GM23248 (cell line): ENCODE measurements at regions of chr18 and their contacts with region 1.

Region 1: DNA sequence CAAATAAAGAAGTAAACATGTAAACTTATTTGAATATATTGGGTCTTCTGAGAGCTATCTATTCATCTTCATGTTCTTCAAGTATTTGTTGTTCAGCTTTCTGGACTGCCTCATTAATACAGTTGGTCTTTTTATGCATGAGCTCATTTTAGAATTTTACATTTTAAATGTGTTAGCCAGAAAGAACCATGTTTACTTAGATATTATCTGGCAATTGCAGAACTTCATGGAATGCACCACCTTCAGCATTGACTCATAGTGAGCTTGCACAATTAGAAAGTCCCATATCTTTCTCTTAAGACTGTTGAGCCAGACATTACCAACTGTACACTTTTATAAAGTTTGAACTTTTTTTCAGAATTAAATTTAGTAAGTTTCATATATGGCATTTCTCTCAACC is 536.7 kb downstream of the RIT2 start:
- DNase-seq: peak; percentile 50
- H3K4me3 ChIP-seq: no peak overlapping the region
- H3K27ac ChIP-seq: no peak overlapping the region
- H3K4me1 ChIP-seq: peaks cover 7% of the 10 kb centered on the region; the same call in 1 of the 2 replicates
- H3K27me3 ChIP-seq: 0 out of 2 replicates have a peak, but pooled peaks cover 5% of the 10 kb centered on the region

Region 2: DNA sequence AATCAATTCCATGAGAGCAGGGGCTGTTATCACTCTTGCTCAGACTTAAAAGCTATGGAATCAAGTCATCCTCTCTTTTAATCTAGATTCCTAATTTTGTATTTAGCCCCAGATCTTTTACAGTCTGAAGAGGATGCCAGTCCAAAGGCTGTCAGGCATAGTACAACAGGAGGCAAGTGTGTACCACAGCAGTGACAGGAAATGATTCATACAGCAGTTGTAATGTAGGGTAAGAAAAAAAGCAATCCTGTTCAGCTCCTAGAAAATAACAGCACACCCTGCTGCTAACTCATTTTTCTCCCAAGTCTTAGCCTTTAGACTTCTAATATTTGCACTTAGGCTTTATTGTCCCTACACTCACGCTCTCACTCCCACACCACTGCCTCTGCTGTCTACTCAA is 826.3 kb after region 1 on chr18:
- in situ Hi-C with region 1: no loop called
- DNase-seq: no peak
- H3K4me3 ChIP-seq: no peak overlapping the region
- H3K27ac ChIP-seq: no peak overlapping the region
- H3K4me1 ChIP-seq: no peaks in the 10 kb centered on the region
- H3K27me3 ChIP-seq: no peaks in the 10 kb centered on the region

Region 3: GRCh38 chr18:43571078-43571689 is 992.4 kb after region 1 on chr18:
- in situ Hi-C with region 1: loop called (anchors 25 kb)
- DNase-seq: peak; percentile 58
- H3K4me3 ChIP-seq: no peak overlapping the region
- H3K27ac ChIP-seq: no peak overlapping the region
- H3K4me1 ChIP-seq: no peaks in the 10 kb centered on the region
- H3K27me3 ChIP-seq: peaks cover 30% of the 10 kb centered on the region